Naive thymus-derived CD4-positive, alpha-beta T cell (primary cell): ENCODE measurements at regions of chr1 and their contacts with region 1.

Region 1: DNA sequence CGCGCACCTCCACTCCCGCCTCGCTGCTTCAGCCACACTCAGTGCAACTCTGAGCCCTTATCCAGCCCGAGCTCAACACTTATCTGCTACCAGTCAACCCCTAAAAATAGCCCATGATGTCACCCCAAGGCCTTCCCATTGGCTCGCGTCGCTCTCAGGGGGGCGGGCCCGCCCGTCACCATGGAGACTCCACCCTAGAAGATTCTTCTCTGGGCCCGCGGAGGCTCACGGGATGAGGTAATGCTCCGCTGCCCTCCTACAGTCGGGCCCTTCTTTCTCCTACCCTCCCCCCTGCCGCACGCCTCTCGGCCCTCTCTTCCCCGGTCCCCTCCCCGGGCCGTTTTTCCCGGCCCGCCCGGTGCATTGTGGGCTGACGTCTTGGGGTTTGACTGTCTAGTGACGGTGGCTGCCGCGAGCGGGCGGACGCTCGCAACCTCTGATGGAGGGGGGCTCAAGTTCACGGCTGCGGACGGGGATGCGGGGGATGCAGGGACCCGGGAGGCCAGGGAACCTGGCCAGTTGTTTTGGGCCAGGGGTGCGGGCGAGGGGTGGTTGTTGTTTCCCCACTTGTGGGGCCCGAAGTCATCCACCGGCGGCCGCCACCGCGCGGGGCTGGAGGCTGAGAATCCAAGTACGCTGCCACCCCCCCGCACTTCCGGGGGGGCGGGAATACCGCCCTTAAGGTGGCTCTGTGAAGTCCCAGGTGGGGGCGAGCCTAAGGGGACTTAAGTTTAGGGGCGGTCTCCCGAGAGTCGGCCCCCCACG is at the start of gene JUN:
- DNase-seq: peak; percentile 94 to 100 (median 98)
- ATAC-seq: peak; percentile 82
- H3K4me3 ChIP-seq: peak within 1 kb of the TSS; percentile 97
- H3K4me3 Mint-ChIP-seq: peak within 1 kb of the TSS; percentile 91 to 100 (median 95)
- H3K27ac ChIP-seq: peak within 1 kb of the TSS; percentile 95
- H3K27ac Mint-ChIP-seq: peak within 1 kb of the TSS; percentile 98 to 100 (median 100)
- H3K4me1 ChIP-seq: peaks cover 13 to 16% of the 10 kb centered on the region in 2 donors
- H3K4me1 Mint-ChIP-seq: peaks cover 7 to 49% (median 33%) of the 10 kb centered on the region in 7 donors
- H3K27me3 ChIP-seq: peaks cover 0 to 4% of the 10 kb centered on the region in 2 donors
- H3K27me3 Mint-ChIP-seq: peaks cover 0 to 5% (median 3%) of the 10 kb centered on the region in 5 donors
- total RNA-seq, gene JUN: 17.9 to 1,362 (median 41.2) TPM

Region 2: DNA sequence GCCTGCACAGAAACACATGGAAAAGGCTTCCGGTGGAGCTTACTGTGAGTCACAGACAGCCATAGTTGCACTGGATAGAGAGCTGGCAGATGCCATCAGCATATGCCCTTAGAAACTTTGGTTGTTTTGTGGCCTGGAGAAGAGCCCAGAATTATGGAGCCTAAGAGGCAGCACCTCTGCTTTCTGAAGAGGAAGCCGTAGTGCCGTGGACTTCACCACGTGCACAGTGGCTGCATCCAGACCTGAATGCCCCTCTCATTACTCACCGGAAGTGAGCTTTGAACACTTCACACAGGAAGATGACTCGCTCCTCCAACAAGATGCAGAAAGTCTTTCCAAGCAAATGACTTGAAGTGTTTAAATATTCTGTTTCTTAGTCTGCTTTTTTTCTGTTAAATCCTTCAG is 28.7 kb before region 1 on chr1:
- CTCF ChIA-PET with region 1: interaction called, 3 read pairs
- POLR2A ChIA-PET with region 1: interaction called, 4 read pairs
- intact Hi-C with region 1: loop called in 1 of 2 experiments (anchors 1 kb)
- DNase-seq: peak in 6 of 9 donors; percentile 7 to 58 (median 10)
- ATAC-seq: peak; percentile 88
- H3K4me3 ChIP-seq: no peak overlapping the region
- H3K4me3 Mint-ChIP-seq: peak overlapping the region; percentile 64 to 77 (median 70)
- H3K27ac ChIP-seq: peak overlapping the region; percentile 23
- H3K27ac Mint-ChIP-seq: peak overlapping the region; percentile 51 to 86 (median 62)
- H3K4me1 ChIP-seq: peaks cover 27 to 37% of the 10 kb centered on the region in 2 donors
- H3K4me1 Mint-ChIP-seq: peaks cover 27 to 51% (median 40%) of the 10 kb centered on the region in 7 donors
- H3K27me3 ChIP-seq: no peaks in the 10 kb centered on the region
- H3K27me3 Mint-ChIP-seq: no peaks in the 10 kb centered on the region

Region 3: GRCh38 chr1:58841455-58841854 is 57.3 kb after region 1 on chr1:
- CTCF ChIA-PET with region 1: no interaction called
- POLR2A ChIA-PET with region 1: interaction called, 3 read pairs
- intact Hi-C with region 1: loop called in 1 of 2 experiments (anchors 1 kb)
- DNase-seq: peak in 1 of 9 donors; percentile 5
- ATAC-seq: peak; percentile 44
- H3K4me3 ChIP-seq: no peak overlapping the region
- H3K4me3 Mint-ChIP-seq: no peak overlapping the region
- H3K27ac ChIP-seq: no peak overlapping the region
- H3K27ac Mint-ChIP-seq: no peak overlapping the region
- H3K4me1 ChIP-seq: no peaks in the 10 kb centered on the region
- H3K4me1 Mint-ChIP-seq: peaks cover 0 to 11% (median 1%) of the 10 kb centered on the region in 7 donors
- H3K27me3 ChIP-seq: no peaks in the 10 kb centered on the region
- H3K27me3 Mint-ChIP-seq: no peaks in the 10 kb centered on the region

Region 4: DNA sequence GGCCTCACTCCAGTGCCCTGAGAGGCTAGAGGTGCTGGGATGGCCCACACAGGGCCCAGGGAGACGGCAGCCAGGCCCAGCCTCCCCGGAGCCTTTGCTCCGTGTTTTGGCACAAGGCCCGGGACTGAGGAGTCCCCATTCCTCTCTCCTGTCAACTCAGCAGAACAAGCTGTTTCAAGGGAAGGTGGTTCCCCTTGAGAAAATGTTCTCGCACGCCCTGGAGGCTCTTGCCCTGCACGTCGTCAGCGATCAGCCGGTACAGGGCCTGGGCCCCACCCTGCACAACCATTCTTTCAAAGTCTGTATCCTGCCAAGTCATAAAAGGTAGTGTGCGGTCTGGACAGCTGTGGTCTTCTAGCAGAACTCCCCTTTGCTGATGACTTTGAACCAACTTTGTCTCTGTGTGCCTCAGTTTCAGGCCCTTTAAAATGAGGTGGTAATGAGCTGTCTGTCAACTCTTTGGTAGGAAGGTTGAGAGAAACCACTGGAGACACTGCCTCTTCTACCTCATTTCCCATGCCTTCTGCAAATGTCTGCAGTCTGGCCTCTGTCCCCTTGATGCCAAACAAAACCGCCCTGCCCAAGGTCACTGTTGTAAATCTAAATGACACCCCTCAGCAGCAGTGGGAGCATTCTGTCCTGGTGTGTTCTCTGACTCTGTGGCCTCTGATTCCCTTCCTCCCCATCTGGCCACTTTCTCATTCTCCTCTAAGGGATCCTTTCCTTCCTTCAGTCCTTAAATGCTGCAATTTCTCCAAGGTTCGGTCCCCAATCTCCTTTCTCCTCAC is 138.3 kb after region 1 on chr1:
- CTCF ChIA-PET with region 1: interaction called, 9 read pairs
- POLR2A ChIA-PET with region 1: no interaction called
- intact Hi-C with region 1: loop called in 1 of 2 experiments (anchors 1 kb)
- DNase-seq: peak in 5 of 9 donors; percentile 26 to 44 (median 34)
- ATAC-seq: peak; percentile 94
- H3K4me3 ChIP-seq: no peak overlapping the region
- H3K4me3 Mint-ChIP-seq: peak overlapping the region in 8 of 10 donors; percentile 3 to 37 (median 16)
- H3K27ac ChIP-seq: no peak overlapping the region
- H3K27ac Mint-ChIP-seq: peak overlapping the region in 3 of 9 donors; percentile 44 to 77 (median 60)
- H3K4me1 ChIP-seq: peaks cover 5 to 6% of the 10 kb centered on the region in 2 donors
- H3K4me1 Mint-ChIP-seq: peaks cover 7 to 34% (median 16%) of the 10 kb centered on the region in 7 donors
- H3K27me3 ChIP-seq: no peaks in the 10 kb centered on the region
- H3K27me3 Mint-ChIP-seq: peaks cover 0 to under 1% (median 0%) of the 10 kb centered on the region in 5 donors

Region 5: GRCh38 chr1:59046730-59047157 is 262.6 kb after region 1 on chr1:
- CTCF ChIA-PET with region 1: no interaction called
- POLR2A ChIA-PET with region 1: interaction called, 5 read pairs
- intact Hi-C with region 1: loop called in 1 of 2 experiments (anchors 1 kb)
- DNase-seq: peak in 7 of 9 donors; percentile 18 to 49 (median 34)
- ATAC-seq: peak; percentile 84
- H3K4me3 ChIP-seq: no peak overlapping the region
- H3K4me3 Mint-ChIP-seq: peak overlapping the region in 8 of 10 donors; percentile 14 to 82 (median 34)
- H3K27ac ChIP-seq: no peak overlapping the region
- H3K27ac Mint-ChIP-seq: peak overlapping the region; percentile 64 to 96 (median 77)
- H3K4me1 ChIP-seq: peaks cover 30% of the 10 kb centered on the region in 2 donors
- H3K4me1 Mint-ChIP-seq: peaks cover 26 to 65% (median 41%) of the 10 kb centered on the region in 7 donors
- H3K27me3 ChIP-seq: no peaks in the 10 kb centered on the region
- H3K27me3 Mint-ChIP-seq: no peaks in the 10 kb centered on the region

Region 6: DNA sequence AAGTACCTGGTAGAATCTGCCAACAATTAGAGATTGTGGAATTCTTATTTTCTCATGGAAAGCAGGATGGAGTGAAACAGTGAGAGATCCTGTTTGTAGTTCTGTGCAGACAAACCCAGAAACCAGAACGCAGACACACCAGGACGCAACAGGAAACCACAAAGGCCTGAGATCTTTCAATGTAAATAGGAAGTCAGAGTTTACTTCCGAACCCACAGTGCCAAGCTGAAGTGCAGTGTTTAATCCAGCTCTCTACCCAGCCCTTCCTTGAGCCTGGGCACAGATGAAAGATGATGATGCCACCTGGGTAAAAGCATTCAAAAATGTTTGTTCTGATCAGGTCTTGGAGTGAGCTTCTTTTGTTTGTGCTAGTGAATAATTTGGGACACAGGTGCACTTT is 786.3 kb after region 1 on chr1:
- CTCF ChIA-PET with region 1: no interaction called
- POLR2A ChIA-PET with region 1: interaction called, 6 read pairs
- intact Hi-C with region 1: loop called in 1 of 2 experiments (anchors 10 kb)
- DNase-seq: peak in 8 of 9 donors; percentile 31 to 67 (median 54)
- ATAC-seq: peak; percentile 93
- H3K4me3 ChIP-seq: peak overlapping the region; percentile 12
- H3K4me3 Mint-ChIP-seq: peak overlapping the region; percentile 18 to 74 (median 46)
- H3K27ac ChIP-seq: no peak overlapping the region
- H3K27ac Mint-ChIP-seq: peak overlapping the region in 2 of 9 donors; percentile 25 to 82
- H3K4me1 ChIP-seq: peaks cover 14 to 20% of the 10 kb centered on the region in 2 donors
- H3K4me1 Mint-ChIP-seq: peaks cover 26 to 41% (median 30%) of the 10 kb centered on the region in 7 donors
- H3K27me3 ChIP-seq: peaks cover 0 to 4% of the 10 kb centered on the region in 2 donors
- H3K27me3 Mint-ChIP-seq: peaks cover 8 to 20% (median 10%) of the 10 kb centered on the region in 5 donors